SK-N-SH (cell line): ENCODE measurements at regions of chr2 and their contacts with region 1.

Region 1: DNA sequence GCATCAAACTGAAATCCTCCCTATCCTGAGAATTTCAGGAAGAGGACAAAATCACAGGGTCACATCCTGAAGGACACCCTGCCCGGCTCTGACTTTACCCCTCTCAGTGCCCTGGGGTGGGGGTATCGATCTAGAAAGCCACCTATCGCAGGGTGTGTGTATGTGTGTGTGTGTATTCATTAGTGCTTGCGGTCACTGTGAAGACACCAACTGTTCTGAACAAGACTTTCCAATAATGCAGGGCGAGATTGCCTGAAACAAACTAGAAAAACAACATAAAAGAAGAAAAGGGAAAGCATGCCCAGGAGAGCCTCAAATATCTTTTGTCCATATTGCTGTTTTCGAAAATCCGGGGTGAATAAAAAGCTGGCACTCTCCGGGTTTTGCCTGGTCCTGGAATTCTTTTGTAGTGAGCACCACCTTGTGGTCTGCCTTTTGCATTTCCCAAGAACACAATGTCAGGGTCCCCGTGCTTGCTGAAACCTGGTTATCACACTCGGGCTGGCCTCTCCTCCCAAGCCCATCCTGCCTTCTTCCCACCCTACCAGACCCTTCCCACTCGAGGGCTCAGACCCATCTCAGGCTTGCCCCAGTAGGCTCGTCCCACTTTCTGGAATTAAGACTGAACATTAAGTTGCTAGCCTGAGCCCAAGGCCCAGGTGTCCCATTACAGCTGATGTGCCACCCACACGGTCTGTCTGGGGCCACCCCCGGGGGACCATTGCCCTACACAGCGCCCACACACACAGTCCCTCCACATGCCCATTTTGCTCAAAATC is 25.0 kb upstream of the COPS8 start:
- DNase-seq: peak; percentile 74
- H3K4me3 ChIP-seq: no peak overlapping the region; a peak in 1 of 4 replicates
- H3K27ac ChIP-seq: no peak overlapping the region
- H3K4me1 ChIP-seq: no peaks in the 10 kb centered on the region; a peak in 1 of 4 replicates
- H3K27me3 ChIP-seq: no peaks in the 10 kb centered on the region
- CTCF ChIP-seq: peak; percentile 77
- EP300 ChIP-seq: no peak
- RAD21 ChIP-seq: peak; percentile 87

Region 2: DNA sequence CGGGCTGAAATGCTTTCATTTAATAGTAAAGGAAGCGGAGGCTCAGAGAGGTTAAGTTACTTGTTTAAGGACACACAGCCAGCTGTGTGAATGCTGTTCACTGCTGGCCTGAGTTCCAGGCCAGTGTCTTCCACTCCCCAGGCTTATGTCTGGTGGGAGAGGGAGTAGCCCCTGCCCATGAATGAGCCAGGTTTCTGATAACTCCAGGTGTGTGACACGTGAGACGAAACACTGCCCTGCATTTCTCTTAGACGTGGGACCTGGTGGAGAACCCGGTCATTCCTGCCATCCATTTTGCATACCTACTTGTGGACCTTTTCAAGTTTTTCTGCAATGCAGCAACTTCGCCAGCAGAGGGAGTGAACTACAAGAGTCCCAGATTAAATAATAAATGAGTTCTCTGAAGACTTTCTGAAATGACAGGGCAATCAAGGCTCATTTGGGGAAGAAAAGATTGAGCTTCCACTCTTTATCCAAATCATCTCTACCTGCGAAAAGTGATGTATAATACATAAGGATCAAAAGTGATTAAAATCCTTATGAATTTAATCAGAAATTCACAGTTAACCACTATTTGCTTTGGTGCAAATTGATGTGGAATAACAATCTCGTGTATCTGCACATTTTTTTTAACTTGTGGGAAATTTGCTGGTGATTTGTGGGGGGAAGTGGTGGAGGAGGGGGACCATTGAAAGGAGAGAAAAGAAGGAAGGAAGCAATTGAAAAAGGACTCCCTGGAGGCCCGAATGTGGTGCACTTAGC is 717.1 kb before region 1 on chr2:
- CTCF ChIA-PET with region 1: interaction called, 31 read pairs
- POLR2A ChIA-PET with region 1: no interaction called
- DNase-seq: peak; percentile 73
- H3K4me3 ChIP-seq: no peak overlapping the region
- H3K27ac ChIP-seq: no peak overlapping the region
- H3K4me1 ChIP-seq: no peaks in the 10 kb centered on the region
- H3K27me3 ChIP-seq: no peaks in the 10 kb centered on the region
- CTCF ChIP-seq: peak; percentile 86
- EP300 ChIP-seq: no peak
- RAD21 ChIP-seq: peak; percentile 60

Region 3: DNA sequence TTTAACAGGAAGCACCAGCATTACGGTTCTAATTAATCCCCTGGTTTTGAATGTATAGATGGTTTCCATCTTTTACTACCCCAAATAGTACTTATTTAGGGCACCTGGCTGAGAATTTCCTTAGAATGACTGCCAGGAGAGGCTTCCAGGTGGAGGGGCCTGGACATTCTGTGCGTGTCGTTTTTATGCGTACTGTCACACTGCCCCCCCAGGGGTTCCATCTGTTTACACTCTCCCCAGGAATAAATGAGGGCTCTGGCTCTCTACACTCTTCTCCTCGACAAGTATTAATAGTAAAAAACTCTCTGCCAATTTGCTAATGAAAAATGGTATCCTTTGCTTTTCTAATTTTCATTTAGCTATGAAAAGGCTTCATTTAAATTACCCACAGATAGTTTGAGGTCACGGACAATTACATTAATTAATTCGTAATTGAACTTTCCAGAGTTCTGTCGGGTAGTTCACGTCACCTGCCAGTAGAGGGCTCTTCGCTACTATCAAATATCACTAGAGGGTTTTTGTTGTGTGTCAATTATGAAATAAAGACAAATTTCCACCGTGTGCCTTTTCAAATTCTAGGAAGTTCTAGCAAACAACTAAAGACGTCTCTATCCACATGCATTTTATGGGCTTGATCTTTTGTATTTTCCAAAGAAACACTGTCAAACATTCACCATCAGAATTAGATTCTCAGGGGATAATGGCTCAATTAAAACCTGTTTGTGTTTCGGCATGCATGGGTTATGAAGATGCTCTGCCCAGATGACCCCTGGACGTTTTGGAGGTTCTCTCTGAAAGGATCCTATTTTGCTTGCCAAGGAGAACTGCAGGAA is 707.7 kb before region 1 on chr2:
- CTCF ChIA-PET with region 1: interaction called, 84 read pairs
- POLR2A ChIA-PET with region 1: no interaction called
- DNase-seq: peak; percentile 58
- H3K4me3 ChIP-seq: peak overlapping the region in 1 of 2 experiments; percentile 14; a peak in 1 of 4 replicates
- H3K27ac ChIP-seq: no peak overlapping the region
- H3K4me1 ChIP-seq: no peaks in the 10 kb centered on the region
- H3K27me3 ChIP-seq: no peaks in the 10 kb centered on the region
- CTCF ChIP-seq: peak; percentile 95
- EP300 ChIP-seq: no peak
- RAD21 ChIP-seq: peak; percentile 78

Region 4: GRCh38 chr2:236512902-236513435 is 547.8 kb before region 1 on chr2:
- CTCF ChIA-PET with region 1: interaction called, 74 read pairs
- POLR2A ChIA-PET with region 1: no interaction called
- DNase-seq: peak; percentile 72
- H3K4me3 ChIP-seq: no peak overlapping the region; a peak in 1 of 4 replicates
- H3K27ac ChIP-seq: no peak overlapping the region
- H3K4me1 ChIP-seq: no peaks in the 10 kb centered on the region
- H3K27me3 ChIP-seq: no peaks in the 10 kb centered on the region; the same call in 1 of the 2 replicates
- CTCF ChIP-seq: peak; percentile 61
- EP300 ChIP-seq: no peak
- RAD21 ChIP-seq: peak; percentile 66

Region 5: GRCh38 chr2:237072067-237072931 is 11.6 kb after region 1 on chr2:
- CTCF ChIA-PET with region 1: interaction called, 11 read pairs
- POLR2A ChIA-PET with region 1: no interaction called
- DNase-seq: peak; percentile 67
- H3K4me3 ChIP-seq: no peak overlapping the region; a peak in 1 of 4 replicates
- H3K27ac ChIP-seq: no peak overlapping the region
- H3K4me1 ChIP-seq: no peaks in the 10 kb centered on the region; a peak in 1 of 4 replicates
- H3K27me3 ChIP-seq: no peaks in the 10 kb centered on the region
- CTCF ChIP-seq: peak; percentile 91
- EP300 ChIP-seq: no peak
- RAD21 ChIP-seq: peak; percentile 84